Prostate gland (tissue), 2 donors: ENCODE measurements at regions of chr18 and their contacts with region 1.

Region 1: GRCh38 chr18:374721-375168 is 106.9 kb upstream of the THOC1 start:
- DNase-seq: no peak
- H3K4me3 ChIP-seq: no peak overlapping the region
- H3K27ac ChIP-seq: no peak overlapping the region
- H3K4me1 ChIP-seq: peaks cover 8% of the 10 kb centered on the region
- H3K27me3 ChIP-seq: no peaks in the 10 kb centered on the region
- CTCF ChIP-seq: no peak
- POLR2A ChIP-seq: no peak

Region 2: DNA sequence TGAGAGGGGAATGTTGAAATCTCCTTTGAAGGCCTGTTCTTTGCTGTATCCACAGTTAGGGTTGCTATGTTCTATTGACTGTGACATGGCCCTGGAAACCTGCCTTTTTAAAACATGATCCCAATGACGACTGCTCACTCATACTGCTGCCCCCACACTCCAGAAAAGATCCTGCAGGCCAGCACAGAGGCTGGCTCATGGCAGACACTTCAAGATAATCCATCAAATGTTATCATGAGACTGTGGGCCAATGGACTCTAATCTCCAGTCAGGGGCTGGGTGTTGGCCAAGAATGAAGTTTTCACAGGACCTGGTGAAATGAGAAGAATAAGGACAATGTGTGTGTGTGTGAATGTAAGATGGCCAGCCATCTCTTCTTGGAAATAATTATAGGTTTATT is 47.9 kb before region 1 on chr18:
- intact Hi-C with region 1: loop called (anchors 5 kb)
- DNase-seq: no peak
- H3K4me3 ChIP-seq: no peak overlapping the region
- H3K27ac ChIP-seq: no peak overlapping the region
- H3K4me1 ChIP-seq: no peaks in the 10 kb centered on the region
- H3K27me3 ChIP-seq: no peaks in the 10 kb centered on the region
- CTCF ChIP-seq: no peak
- POLR2A ChIP-seq: no peak

Region 3: DNA sequence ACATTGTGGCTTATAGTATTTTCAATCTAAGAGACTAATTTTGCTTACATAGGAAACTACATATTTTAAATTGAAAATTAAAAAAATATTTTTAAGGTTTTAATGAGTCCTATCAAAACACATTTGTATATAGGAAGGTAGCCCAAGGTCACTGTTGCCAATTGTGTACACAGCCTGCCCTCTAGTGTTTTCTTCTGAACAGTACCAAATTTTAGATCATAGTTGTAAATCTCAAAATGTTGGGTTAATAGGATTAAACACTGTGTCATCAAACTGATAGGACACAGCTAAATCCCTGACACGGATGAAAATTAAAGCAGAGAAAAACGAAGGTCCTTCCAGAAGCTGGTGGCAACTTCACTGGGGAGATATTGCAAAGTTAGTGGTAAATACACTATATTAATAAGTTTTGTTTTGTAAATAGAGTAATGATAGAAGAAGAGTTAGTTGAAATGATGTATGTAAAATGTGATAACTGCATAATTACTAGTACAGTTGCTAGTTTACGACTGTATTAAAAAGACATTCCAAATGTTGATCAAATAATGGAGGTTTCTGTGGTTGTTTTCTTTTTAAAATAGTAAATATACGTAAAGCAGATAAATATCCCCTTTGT is 241.7 kb after region 1 on chr18:
- intact Hi-C with region 1: loop called (anchors 10 kb)
- DNase-seq: no peak
- H3K4me3 ChIP-seq: no peak overlapping the region
- H3K27ac ChIP-seq: no peak overlapping the region
- H3K4me1 ChIP-seq: no peaks in the 10 kb centered on the region
- H3K27me3 ChIP-seq: no peaks in the 10 kb centered on the region
- CTCF ChIP-seq: peak; percentile 27 to 82 (median 74)
- POLR2A ChIP-seq: no peak